Activated CD4-positive, alpha-beta T cell treated with anti-CD3 and anti-CD28 coated beads for 36 hours (primary cell): ENCODE measurements at regions of chr2 and their contacts with region 1.

Region 1: GRCh38 chr2:108583903-108584520 is 49.7 kb downstream of the LIMS1 start:
- DNase-seq: peak; percentile 69
- ATAC-seq: peak; percentile 73
- H3K4me3 Mint-ChIP-seq: no peak overlapping the region
- H3K27ac Mint-ChIP-seq: no peak overlapping the region
- H3K4me1 Mint-ChIP-seq: peaks cover 38% of the 10 kb centered on the region
- H3K27me3 Mint-ChIP-seq: no peaks in the 10 kb centered on the region

Region 2: DNA sequence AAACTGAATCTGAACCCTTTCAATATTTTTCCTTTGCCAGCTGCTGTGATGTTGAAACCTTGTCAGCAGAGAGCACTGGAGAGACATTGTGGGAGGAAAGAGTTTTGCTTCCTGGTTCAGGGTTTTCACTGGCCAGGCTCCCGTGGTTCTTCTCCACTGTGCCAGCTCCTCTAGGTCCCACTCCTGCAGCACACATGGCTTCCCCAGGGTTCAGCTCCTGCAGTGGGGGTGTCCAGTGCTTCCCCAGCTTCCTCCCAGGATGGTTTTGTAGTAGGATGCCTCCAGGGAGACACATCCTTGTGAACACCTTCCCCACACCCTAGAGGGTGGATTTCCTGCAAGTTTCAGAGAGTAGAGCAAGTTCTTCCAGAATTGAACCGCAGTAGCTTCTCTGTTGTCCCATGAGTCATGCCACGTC is 368.2 kb before region 1 on chr2:
- CTCF ChIA-PET with region 1: no interaction called
- POLR2A ChIA-PET with region 1: no interaction called
- intact Hi-C with region 1: loop called in 1 of 2 experiments (anchors 5 kb)
- DNase-seq: no peak
- ATAC-seq: no peak
- H3K4me3 Mint-ChIP-seq: no peak overlapping the region
- H3K27ac Mint-ChIP-seq: no peak overlapping the region
- H3K4me1 Mint-ChIP-seq: no peaks in the 10 kb centered on the region
- H3K27me3 Mint-ChIP-seq: peaks cover 5% of the 10 kb centered on the region

Region 3: DNA sequence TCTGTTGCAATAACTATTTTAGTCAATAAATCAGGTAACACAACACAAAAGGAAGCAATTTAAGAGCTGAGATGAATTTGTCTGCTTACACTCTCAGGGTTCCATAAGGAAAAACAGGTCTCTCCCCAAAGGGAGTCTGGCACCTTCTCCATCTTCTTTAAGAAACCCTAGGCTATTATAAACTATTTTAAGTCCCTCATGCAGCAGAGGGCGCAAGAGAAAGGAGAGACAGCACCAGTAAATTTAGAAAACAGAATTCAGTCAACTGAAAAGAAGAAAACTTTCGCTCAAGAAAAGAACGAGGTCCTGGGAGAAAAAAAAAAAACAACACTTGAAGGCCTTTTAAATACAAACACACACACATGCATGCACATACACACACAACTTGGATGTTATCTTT is 187.2 kb before region 1 on chr2:
- CTCF ChIA-PET with region 1: interaction called, 3 read pairs
- POLR2A ChIA-PET with region 1: no interaction called
- intact Hi-C with region 1: loop called (anchors 5 kb)
- DNase-seq: peak; percentile 32
- ATAC-seq: no peak
- H3K4me3 Mint-ChIP-seq: no peak overlapping the region
- H3K27ac Mint-ChIP-seq: no peak overlapping the region
- H3K4me1 Mint-ChIP-seq: no peaks in the 10 kb centered on the region
- H3K27me3 Mint-ChIP-seq: no peaks in the 10 kb centered on the region

Region 4: DNA sequence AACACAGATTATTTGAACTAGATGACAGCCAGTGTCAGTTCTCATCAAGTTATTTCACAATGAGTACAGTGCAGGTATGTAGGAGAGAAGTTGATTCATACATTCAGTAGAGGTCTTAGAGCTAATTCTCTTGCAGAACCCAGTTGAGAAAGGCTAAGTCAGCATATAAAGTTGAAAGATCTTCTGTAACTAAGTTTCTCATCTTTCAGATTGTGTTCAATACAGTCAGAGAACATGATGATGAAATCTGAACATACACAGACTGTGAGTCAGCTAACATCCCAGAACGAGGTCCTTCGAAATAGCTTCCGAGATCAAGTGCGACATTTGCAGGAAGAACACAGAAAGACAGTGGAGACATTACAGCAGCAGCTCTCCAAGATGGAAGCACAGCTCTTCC is 91.6 kb before region 1 on chr2:
- CTCF ChIA-PET with region 1: no interaction called
- POLR2A ChIA-PET with region 1: no interaction called
- intact Hi-C with region 1: loop called in 1 of 2 experiments (anchors 5 kb)
- DNase-seq: no peak
- ATAC-seq: peak; percentile 74
- H3K4me3 Mint-ChIP-seq: no peak overlapping the region
- H3K27ac Mint-ChIP-seq: peak overlapping the region; percentile 23
- H3K4me1 Mint-ChIP-seq: peaks cover 12% of the 10 kb centered on the region
- H3K27me3 Mint-ChIP-seq: no peaks in the 10 kb centered on the region

Region 5: DNA sequence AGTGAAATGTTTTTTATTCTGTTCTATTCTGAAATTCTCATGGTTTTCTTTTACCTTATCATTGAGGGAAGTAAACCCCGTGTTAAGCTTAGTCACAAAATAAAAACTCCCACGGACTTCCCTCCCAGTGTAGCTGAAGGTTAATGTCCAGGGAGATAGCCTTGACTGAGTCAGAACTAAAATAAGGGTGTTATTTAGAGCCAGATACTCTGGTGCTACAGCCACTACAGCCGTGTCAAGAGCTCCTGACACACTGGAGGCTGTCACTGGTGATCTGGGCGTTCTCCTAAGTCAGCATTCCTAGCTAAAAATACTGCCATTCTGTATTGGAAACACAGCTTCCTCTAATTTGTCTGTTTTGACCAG is 53.3 kb after region 1 on chr2:
- CTCF ChIA-PET with region 1: interaction called, 12 read pairs
- POLR2A ChIA-PET with region 1: no interaction called
- intact Hi-C with region 1: no loop called
- DNase-seq: no peak
- ATAC-seq: no peak
- H3K4me3 Mint-ChIP-seq: no peak overlapping the region
- H3K27ac Mint-ChIP-seq: peak overlapping the region; percentile 60
- H3K4me1 Mint-ChIP-seq: peaks cover 73% of the 10 kb centered on the region
- H3K27me3 Mint-ChIP-seq: no peaks in the 10 kb centered on the region